ENCODE measurements at regions of chr3 and their contacts with region 1.

Region 1: DNA sequence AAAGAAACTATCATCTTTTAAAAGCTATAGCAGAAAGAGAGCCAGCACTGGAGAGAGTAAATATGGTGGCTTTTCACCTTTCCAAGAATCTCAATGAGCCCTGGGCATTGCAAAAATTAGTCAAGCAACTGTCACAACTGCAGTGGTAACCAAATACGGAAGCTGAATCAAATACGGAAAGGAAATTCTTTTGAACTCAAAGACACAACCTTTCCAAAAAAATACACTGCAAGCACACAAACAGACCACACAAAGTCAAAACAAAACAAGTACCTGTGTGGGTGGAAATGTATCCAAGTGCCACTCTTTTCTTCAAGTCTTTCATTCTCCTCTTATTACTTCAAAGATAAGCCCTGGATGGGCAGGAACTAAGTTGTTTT is 17.6 kb downstream of the VGLL4 start:
- DNase-seq: peak; percentile 49
- ATAC-seq: peak; percentile 48
- H3K4me3 Mint-ChIP-seq: peak overlapping the region; percentile 17
- H3K27ac Mint-ChIP-seq: peak overlapping the region; percentile 92
- H3K4me1 Mint-ChIP-seq: peaks cover 65% of the 10 kb centered on the region
- H3K27me3 Mint-ChIP-seq: no peaks in the 10 kb centered on the region

Region 2: GRCh38 chr3:11641683-11642430 is 15.8 kb after region 1 on chr3:
- CTCF ChIA-PET with region 1: interaction called, 18 read pairs
- DNase-seq: no peak
- ATAC-seq: no peak
- H3K4me3 Mint-ChIP-seq: peak overlapping the region; percentile 97
- H3K27ac Mint-ChIP-seq: peak overlapping the region; percentile 95
- H3K4me1 Mint-ChIP-seq: peaks cover 49% of the 10 kb centered on the region
- H3K27me3 Mint-ChIP-seq: no peaks in the 10 kb centered on the region

Region 3: DNA sequence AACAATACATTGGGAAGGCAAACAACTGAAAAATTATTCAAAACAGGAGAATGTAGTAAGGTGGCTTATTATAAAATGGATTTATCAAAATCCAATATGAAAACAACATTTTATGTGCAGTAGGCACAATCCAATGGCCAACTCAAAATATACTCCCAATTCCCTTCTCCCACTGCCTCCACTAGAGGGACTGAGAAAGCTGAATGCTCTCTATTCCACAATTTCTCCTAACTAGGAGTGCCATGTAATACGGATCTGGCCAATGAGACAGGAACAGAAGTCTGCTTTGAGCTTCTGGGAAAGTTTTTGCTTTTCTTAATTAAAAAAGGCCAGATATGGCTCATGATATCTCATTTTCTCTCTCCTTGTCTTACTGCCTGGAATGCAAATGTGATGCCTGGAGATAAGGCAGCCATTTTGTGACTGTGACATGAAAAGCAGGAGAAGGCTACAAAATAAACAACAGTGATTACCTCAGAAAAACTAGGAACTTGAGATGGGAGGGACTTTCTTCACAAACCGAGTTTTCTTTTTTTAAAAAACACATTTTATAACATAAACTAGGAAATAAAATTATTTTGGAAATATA is 36.4 kb after region 1 on chr3:
- CTCF ChIA-PET with region 1: no interaction called
- DNase-seq: no peak
- ATAC-seq: no peak
- H3K4me3 Mint-ChIP-seq: no peak overlapping the region
- H3K27ac Mint-ChIP-seq: no peak overlapping the region
- H3K4me1 Mint-ChIP-seq: peaks cover 4% of the 10 kb centered on the region
- H3K27me3 Mint-ChIP-seq: no peaks in the 10 kb centered on the region